ENCODE measurements at regions of chr11 and their contacts with region 1.

Region 1: DNA sequence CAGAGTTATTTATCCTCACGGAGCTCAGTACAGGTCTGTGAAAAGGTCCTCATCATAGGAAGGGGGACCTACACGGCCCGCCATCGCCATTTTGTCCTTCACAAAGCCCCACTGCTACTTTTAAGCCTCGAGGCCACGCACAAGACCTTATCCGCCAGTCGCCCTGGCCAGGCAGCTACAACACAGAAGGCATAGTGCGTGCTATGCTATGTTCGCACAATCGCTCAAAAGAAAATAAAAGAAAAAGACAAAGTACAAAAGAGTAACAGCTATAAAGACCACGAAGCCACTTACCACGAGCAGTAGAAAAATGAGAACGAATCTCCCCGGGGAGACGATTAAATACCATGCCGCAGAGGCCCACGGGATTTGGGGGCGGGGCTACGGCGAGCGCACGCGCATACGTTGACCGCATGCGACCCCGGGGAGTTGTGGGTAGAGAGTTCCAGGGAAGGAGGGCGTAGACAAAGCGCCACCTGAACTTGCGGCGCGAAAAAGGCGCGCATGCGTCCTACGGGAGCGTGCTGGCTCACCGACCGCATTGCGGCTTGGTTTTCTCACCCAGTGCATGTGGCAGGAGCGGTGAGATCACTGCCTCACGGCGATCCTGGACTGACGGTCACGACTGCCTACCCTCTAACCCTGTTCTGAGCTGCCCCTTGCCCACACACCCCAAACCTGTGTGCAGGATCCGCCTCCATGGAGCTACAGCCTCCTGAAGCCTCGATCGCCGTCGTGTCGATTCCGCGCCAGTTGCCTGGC is 16.4 kb upstream of the WDR74 start:
- DNase-seq: peak; percentile 98
- ATAC-seq: peak; percentile 89
- H3K4me3 Mint-ChIP-seq: peak overlapping the region; percentile 95
- H3K27ac Mint-ChIP-seq: peak overlapping the region; percentile 95
- H3K4me1 Mint-ChIP-seq: peaks cover 46% of the 10 kb centered on the region
- H3K27me3 Mint-ChIP-seq: no peaks in the 10 kb centered on the region
- CTCF ChIP-seq: no peak

Region 2: DNA sequence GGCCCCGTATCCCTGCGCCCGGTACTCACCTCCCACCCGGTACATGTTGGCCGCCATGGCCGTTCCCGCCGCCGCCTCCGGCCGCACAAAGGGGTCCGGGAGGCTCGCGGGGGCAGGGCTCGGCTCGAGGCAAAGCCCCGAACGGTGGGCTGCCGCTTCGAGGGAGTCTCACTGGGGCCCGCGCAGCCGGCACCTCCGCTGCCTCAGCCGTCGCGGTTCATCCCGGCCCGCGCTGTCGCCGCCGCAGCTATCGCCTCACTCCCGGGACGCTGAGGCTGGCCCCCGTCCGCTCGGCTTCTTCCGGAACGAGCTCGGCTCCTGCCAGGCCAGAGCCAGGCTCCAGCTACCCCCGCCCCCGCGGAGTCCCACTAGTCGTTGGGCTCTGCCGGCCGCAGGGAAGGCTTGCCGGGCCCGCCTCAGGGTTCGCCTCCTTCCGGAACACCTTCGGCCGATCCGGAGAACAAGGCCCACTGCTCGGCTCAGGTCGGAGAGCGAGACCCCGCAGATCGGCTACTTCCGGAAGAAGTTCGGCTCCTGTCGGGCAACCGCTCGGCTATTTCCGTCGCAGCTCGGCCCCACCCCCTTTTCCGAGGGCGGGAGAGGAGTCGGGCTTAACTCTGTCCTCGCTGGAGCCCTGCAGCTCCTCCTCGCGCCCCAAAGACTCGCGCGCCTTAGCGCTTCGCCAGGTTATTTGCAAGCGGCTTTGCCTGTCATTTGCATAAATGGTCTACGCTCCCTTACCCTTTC is 254.2 kb before region 1 on chr11 and contains the start of gene MTA2:
- CTCF ChIA-PET with region 1: no interaction called
- POLR2A ChIA-PET with region 1: interaction called, 21 read pairs
- intact Hi-C with region 1: no loop called
- DNase-seq: peak; percentile 99
- ATAC-seq: peak; percentile 89
- H3K4me3 Mint-ChIP-seq: peak within 1 kb of the TSS; percentile 86
- H3K27ac Mint-ChIP-seq: peak within 1 kb of the TSS; percentile 95
- H3K4me1 Mint-ChIP-seq: peaks cover 43% of the 10 kb centered on the region
- H3K27me3 Mint-ChIP-seq: no peaks in the 10 kb centered on the region
- CTCF ChIP-seq: no peak
- total RNA-seq, gene MTA2: 159 to 164 TPM

Region 3: DNA sequence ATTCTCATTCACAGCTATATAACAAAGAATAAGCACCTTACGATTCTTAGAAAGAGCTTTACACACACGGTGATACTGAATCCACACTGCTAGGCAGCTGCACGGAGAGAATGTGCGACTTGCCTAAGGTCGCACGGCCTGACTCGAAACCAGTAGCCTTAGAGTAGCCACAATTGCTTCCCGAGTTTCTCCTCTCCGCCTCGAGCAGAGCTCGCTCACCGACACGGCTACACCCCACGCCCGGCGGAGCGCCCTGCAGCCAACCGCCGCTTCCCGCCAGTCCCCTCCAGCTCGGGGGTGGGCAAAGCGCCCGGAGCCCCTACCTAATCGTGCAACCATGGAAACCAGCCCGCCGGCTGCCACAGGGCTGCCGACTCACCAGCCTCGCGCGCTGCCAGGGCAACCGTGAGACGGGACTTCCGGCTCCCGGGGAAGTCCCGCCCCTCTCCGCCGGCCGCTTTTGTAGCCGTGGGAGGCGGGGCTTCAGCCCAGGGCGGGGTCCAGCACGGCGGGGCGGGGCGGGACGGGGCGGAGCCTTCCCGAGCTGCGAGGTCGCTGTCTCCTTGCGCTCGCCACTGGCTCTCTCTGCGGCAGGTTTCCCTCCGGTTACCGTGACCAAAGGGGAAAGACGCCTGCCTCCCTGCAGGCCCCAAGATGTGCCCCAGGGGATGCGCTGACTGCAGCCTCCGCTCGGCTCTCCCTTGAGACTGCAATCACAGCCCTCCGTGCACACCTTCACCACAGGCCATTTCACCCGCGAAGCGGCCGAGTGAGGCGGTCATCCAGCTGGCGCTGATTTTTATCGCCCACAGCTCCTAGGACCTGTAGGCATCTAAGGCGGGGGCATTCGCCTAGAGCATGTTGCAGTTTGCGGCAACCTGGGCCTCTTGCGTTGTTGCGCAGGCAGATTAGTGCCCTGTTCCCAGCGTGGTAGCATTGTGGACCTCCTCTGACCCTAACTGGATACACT is 149.6 kb before region 1 on chr11:
- CTCF ChIA-PET with region 1: no interaction called
- POLR2A ChIA-PET with region 1: interaction called, 34 read pairs
- intact Hi-C with region 1: no loop called
- DNase-seq: peak; percentile 97
- ATAC-seq: peak; percentile 77
- H3K4me3 Mint-ChIP-seq: peak overlapping the region; percentile 84
- H3K27ac Mint-ChIP-seq: peak overlapping the region; percentile 77
- H3K4me1 Mint-ChIP-seq: peaks cover 43% of the 10 kb centered on the region
- H3K27me3 Mint-ChIP-seq: no peaks in the 10 kb centered on the region
- CTCF ChIP-seq: no peak

Region 4: DNA sequence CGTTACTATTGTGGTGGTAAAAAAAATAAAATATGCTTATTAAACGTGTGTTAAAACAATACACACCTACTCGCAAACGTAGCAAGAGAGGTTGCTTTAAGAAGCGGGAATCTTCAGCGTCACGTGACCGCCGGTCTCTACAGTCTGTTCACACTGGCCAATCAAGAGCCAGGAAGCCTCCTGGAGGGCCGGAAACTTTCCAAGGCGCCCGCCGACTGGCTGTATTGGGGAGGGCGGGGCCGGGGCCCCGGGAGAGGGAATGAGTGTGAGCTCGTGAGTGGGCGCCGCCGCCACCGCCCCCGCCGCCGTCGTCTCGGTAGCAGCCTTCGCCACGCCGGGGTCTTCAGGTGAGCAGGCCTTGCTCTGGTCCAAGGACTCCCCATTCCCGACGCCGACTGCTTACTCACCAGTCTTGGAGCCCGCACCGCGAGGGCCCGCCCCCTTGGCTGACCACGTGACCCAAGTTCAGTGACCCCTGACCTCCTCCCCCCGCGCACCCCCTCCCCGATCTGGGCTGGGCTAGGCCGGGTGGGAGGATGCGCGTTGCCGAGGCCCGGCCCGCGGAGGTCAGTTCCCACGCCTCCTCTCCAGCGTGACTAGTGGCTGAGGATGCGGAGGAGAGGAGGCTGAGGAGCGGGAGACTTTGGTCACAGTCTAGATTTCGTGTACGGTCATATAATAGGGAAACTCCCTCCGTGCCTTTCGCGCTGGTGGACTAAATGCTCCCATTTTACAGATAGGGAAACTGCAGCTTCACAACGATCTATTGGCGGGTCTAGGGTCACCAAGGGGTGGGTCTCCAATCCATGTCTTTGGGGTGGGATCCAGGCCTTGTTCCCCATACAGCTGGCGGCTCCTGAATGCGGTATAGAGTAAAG is 84.4 kb before region 1 on chr11 and contains the start of gene TAF6L:
- CTCF ChIA-PET with region 1: interaction called, 3 read pairs
- POLR2A ChIA-PET with region 1: interaction called, 38 read pairs
- intact Hi-C with region 1: no loop called
- DNase-seq: peak; percentile 97
- ATAC-seq: peak; percentile 88
- H3K4me3 Mint-ChIP-seq: peak within 1 kb of the TSS; percentile 81
- H3K27ac Mint-ChIP-seq: peak within 1 kb of the TSS; percentile 93
- H3K4me1 Mint-ChIP-seq: peaks cover 21% of the 10 kb centered on the region
- H3K27me3 Mint-ChIP-seq: no peaks in the 10 kb centered on the region
- CTCF ChIP-seq: no peak
- total RNA-seq, gene TAF6L: 13.7 to 16.7 TPM

Region 5: DNA sequence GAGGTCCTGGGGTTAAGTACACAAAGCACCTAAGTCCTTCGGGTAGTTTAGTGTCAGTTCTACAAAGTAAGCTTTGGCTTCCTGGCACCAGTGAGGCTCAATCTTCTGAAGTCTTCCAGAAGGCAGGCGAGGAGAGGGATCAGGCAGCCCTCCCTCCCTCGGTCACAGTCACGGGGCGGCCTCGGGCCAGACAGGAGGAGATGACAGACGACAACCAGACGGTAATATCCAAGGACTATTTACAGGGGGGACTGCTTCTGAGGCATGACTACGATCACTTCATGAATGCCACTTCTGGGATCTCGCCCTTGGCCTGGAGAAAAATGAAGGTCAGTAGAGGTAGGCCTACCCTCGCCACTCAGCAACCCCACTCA is 63.6 kb before region 1 on chr11:
- CTCF ChIA-PET with region 1: interaction called, 47 read pairs
- POLR2A ChIA-PET with region 1: interaction called, 183 read pairs
- intact Hi-C with region 1: no loop called
- DNase-seq: peak; percentile 31
- ATAC-seq: peak; percentile 12
- H3K4me3 Mint-ChIP-seq: peak overlapping the region; percentile 91
- H3K27ac Mint-ChIP-seq: peak overlapping the region; percentile 91
- H3K4me1 Mint-ChIP-seq: peaks cover 41% of the 10 kb centered on the region
- H3K27me3 Mint-ChIP-seq: no peaks in the 10 kb centered on the region
- CTCF ChIP-seq: no peak

Region 6: DNA sequence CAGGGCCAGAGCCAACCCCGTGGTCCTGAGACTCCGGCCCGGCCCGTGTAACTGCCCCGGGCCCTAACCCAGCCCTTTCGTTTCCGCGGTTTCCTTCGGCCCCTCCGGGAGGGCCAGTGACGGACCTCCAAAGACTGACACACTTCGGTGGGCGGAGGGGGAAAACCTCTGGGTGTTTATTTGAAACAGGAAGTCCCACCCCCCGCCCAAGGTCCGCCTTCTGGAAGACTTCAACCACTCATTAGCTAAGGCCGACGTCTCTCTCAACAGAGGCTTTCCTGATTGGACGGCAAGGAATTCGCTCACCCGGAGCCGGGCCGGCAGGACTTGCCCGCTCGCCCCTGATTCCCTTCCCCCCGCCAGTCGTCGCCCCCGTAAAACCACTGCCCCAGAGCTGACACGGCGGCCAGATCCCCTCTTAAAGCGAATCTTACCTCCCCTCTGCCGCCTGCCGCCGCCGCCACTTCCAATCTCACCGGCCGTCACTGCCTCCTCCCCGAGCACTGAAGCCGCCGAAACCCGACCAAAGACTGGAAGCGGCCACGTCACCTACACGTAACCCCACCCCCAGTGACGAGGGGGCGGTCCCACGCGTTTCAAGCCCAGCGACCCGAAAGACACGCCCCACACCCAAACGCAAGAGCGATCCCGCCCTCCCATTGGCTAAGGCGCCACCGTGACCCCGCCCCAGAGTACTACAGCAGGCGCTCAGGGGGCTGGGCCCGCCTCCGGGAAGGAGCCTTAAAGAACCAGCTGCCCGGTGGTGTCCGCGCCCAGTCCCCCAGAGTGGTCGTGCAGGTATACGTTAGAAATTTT is 24.0 kb before region 1 on chr11 and contains the start of gene STX5:
- CTCF ChIA-PET with region 1: interaction called, 3 read pairs
- POLR2A ChIA-PET with region 1: interaction called, 997 read pairs
- intact Hi-C with region 1: no loop called
- DNase-seq: peak; percentile 100
- ATAC-seq: peak; percentile 95
- H3K4me3 Mint-ChIP-seq: peak within 1 kb of the TSS; percentile 88
- H3K27ac Mint-ChIP-seq: peak within 1 kb of the TSS; percentile 95
- H3K4me1 Mint-ChIP-seq: peaks cover 47% of the 10 kb centered on the region
- H3K27me3 Mint-ChIP-seq: no peaks in the 10 kb centered on the region
- CTCF ChIP-seq: no peak
- total RNA-seq, gene STX5: 22.0 to 22.8 TPM